Esophagus squamous epithelium (tissue), 5 donors: ENCODE measurements at regions of chr15 and their contacts with region 1.

Region 1: GRCh38 chr15:100341662-100342560 is at the start of gene ADAMTS17:
- DNase-seq: peak; percentile 66
- H3K4me3 ChIP-seq: peak within 1 kb of the TSS; percentile 65 to 89 (median 84)
- H3K27ac ChIP-seq: peak within 1 kb of the TSS; percentile 84 to 91 (median 88)
- H3K4me1 ChIP-seq: peaks cover 4 to 35% (median 7%) of the 10 kb centered on the region in 3 donors
- H3K27me3 ChIP-seq: peaks cover 0 to 15% (median 0%) of the 10 kb centered on the region in 4 donors
- CTCF ChIP-seq: peak; percentile 78 to 97 (median 95)
- POLR2A ChIP-seq: peak in 3 of 4 donors; percentile 89 to 96 (median 93)
- total RNA-seq, gene ADAMTS17: 4.5 to 11.4 (median 6.6) TPM

Region 2: DNA sequence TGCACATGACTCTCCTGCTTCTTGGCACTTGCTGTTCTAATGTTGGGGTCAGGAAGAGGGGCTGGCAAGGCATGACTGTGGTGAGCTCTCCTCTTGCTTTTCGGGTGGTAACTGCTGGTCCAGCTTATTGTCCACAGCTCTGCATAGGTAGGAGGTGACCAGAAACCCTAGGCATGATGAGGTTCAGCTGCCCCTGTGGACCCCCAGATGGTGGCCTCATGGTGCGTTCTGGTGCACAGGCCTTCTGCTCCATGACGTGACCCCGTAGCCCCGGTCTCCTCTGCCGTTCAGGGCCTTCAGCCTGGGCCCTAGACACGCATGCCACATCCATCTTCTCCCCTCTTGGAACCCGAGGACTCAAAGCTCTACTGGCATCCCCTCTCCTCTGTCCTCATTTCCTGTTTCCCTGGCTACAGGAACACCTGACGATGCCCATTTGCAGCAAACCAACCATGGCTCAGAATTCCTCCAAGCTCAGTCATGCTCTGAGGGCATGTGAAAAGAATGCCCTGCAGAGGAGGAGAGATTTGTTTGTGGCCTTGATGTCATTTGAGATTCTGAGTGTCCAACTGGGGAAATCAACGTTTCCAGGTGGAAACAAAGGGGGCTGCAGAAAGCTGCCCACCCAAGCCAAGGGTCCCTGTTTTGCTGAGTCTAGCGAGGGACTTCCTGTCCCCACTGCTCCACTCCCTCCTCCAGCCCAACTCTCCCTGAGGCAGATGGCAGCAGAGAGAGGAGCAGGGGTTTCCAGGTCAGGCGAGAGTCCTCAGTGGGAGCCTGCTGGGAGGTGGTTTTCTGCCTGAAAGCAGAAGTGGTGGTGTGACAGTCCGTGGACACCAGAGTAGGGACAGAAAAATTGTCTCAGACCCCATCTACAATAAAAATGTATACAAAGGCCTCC is 410.0 kb before region 1 on chr15:
- intact Hi-C with region 1: loop called (anchors 2 kb)
- DNase-seq: no peak
- H3K4me3 ChIP-seq: no peak overlapping the region
- H3K27ac ChIP-seq: no peak overlapping the region
- H3K4me1 ChIP-seq: peaks cover 5 to 12% (median 8%) of the 10 kb centered on the region in 3 donors
- H3K27me3 ChIP-seq: peaks cover 0 to 12% (median 0%) of the 10 kb centered on the region in 4 donors
- CTCF ChIP-seq: no peak
- POLR2A ChIP-seq: no peak